ENCODE measurements at regions of chr5 and their contacts with region 1.

Region 1: GRCh38 chr5:176609724-176610434 is at the start of gene GPRIN1:
- DNase-seq: peak; percentile 90
- H3K4me3 Mint-ChIP-seq: peak within 1 kb of the TSS; percentile 84
- H3K27ac Mint-ChIP-seq: peak within 1 kb of the TSS; percentile 29
- H3K4me1 Mint-ChIP-seq: peaks cover 19% of the 10 kb centered on the region
- H3K27me3 Mint-ChIP-seq: peaks cover 23% of the 10 kb centered on the region
- CTCF ChIP-seq: peak; percentile 50
- total RNA-seq, gene GPRIN1: 11.5 and 12.6 TPM in 2 replicates

Region 2: GRCh38 chr5:176543428-176544173 is 66.3 kb before region 1 on chr5:
- CTCF ChIA-PET with region 1: interaction called, 13 read pairs
- intact Hi-C with region 1: loop called (anchors 5 kb)
- DNase-seq: peak; percentile 80
- H3K4me3 Mint-ChIP-seq: peak overlapping the region; percentile 84
- H3K27ac Mint-ChIP-seq: peak overlapping the region; percentile 84
- H3K4me1 Mint-ChIP-seq: peaks cover 81% of the 10 kb centered on the region
- H3K27me3 Mint-ChIP-seq: no peaks in the 10 kb centered on the region
- CTCF ChIP-seq: no peak